HepG2 (cell line): ENCODE measurements at regions of chr22 and their contacts with region 1.

Region 1: DNA sequence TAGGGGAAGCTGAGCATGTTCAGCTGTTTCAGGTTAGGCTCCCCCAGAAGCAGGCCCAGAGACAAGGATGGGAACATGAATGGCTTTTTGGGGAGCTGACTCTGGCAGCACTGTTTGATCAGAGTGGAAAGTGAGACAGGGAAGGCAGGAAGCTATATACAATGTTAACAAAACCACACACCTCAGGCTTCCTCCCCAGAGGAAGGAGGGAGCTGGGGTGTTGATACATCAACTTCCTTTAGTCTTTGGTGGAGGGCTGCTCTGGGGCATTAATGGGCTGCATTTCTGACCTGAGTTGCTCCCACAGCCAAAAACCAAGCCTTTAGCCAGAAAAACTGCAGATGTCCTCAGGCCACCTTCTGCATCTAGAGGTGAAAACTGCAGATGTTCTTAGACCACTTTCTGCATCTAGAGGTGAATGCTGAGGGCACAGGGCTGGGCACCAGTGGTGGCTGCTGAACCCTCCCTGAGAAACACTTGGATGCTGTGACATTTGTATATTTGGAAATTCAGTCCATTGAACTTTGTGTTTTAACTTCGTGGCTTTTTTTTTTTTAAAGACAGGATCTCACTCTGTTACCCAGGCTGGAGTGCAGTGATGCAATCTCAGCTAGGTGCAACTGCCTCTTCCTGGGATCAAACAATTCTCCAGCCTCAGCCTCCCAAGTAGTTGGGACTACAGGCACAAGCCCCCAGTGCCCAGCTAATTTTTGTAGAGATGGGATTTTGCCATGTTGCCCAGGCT is 49.9 kb downstream of the KIAA1671 start:
- DNase-seq: peak; percentile 35
- ATAC-seq: peak; percentile 41
- H3K4me3 ChIP-seq: no peak overlapping the region
- H3K27ac ChIP-seq: peak overlapping the region; percentile 27
- H3K4me1 ChIP-seq: peaks cover 22% of the 10 kb centered on the region
- H3K27me3 ChIP-seq: no peaks in the 10 kb centered on the region
- CTCF ChIP-seq: no peak
- EP300 ChIP-seq: no peak
- POLR2A ChIP-seq: no peak
- RAD21 ChIP-seq: no peak

Region 2: GRCh38 chr22:24969560-24970301 is 32.7 kb before region 1 on chr22:
- CTCF ChIA-PET with region 1: no interaction called
- POLR2A ChIA-PET with region 1: no interaction called
- in situ Hi-C with region 1: no loop called
- intact Hi-C with region 1: loop called (anchors 5 kb)
- DNase-seq: peak; percentile 60
- ATAC-seq: peak; percentile 79
- H3K4me3 ChIP-seq: no peak overlapping the region; a peak in 1 of 6 replicates
- H3K27ac ChIP-seq: peak overlapping the region; percentile 34
- H3K4me1 ChIP-seq: peaks cover 50% of the 10 kb centered on the region
- H3K27me3 ChIP-seq: no peaks in the 10 kb centered on the region
- CTCF ChIP-seq: no peak
- EP300 ChIP-seq: no peak
- POLR2A ChIP-seq: no peak
- RAD21 ChIP-seq: no peak

Region 3: DNA sequence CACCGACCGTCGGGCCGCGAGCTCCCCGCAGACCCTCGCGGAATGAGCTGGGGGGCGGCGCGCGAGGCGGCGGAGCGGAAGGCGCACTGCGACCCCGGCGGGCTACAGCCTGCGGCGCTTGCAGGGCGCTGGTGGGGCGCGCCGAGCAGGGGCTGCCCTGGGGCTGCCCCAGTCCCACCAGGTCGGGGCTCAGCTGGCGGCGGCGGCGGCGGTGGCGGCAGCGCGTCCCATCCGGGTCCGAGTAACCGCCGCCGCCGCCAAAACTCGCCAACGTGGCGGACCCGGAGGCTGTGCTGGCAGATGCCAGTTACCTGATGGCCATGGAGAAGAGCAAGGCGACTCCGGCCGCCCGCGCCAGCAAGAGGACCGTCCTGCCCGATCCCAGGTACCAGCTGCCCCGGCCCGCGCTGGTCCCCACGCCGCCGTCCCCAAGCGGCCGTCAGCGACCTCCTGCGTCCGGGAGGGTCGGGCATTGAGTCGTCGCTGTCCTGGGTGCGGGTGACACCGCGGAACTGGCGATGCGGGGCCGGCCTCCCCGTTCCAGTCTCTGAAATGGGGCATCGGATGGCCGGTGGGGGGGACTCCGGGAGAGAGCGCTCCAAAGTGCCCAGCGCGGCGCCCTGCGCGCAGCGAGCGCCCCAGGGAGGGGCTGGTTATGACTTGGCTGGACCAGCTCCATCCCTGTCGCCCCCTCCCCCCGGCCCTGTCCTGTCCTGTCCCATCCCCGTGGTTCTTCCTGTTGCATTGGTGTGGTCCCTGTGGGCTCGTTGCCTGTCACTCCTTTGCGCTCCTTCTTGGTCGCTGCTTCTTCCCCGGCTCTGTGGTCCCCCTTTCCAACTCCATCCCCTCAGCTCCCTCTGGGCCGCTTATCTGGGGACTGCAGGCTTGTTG is 280.5 kb after region 1 on chr22:
- CTCF ChIA-PET with region 1: no interaction called
- POLR2A ChIA-PET with region 1: no interaction called
- in situ Hi-C with region 1: no loop called
- intact Hi-C with region 1: no loop called
- DNase-seq: no peak
- ATAC-seq: no peak
- H3K4me3 ChIP-seq: no peak overlapping the region
- H3K27ac ChIP-seq: no peak overlapping the region
- H3K4me1 ChIP-seq: no peaks in the 10 kb centered on the region
- H3K27me3 ChIP-seq: peaks cover 3 to 35% of the 10 kb centered on the region in 2 experiments; a peak in 4 of 5 replicates
- CTCF ChIP-seq: no peak
- EP300 ChIP-seq: no peak
- POLR2A ChIP-seq: no peak
- RAD21 ChIP-seq: no peak